Cardiac septum (tissue), 1 donor: ENCODE measurements at regions of chr2 and their contacts with region 1.

Region 1: DNA sequence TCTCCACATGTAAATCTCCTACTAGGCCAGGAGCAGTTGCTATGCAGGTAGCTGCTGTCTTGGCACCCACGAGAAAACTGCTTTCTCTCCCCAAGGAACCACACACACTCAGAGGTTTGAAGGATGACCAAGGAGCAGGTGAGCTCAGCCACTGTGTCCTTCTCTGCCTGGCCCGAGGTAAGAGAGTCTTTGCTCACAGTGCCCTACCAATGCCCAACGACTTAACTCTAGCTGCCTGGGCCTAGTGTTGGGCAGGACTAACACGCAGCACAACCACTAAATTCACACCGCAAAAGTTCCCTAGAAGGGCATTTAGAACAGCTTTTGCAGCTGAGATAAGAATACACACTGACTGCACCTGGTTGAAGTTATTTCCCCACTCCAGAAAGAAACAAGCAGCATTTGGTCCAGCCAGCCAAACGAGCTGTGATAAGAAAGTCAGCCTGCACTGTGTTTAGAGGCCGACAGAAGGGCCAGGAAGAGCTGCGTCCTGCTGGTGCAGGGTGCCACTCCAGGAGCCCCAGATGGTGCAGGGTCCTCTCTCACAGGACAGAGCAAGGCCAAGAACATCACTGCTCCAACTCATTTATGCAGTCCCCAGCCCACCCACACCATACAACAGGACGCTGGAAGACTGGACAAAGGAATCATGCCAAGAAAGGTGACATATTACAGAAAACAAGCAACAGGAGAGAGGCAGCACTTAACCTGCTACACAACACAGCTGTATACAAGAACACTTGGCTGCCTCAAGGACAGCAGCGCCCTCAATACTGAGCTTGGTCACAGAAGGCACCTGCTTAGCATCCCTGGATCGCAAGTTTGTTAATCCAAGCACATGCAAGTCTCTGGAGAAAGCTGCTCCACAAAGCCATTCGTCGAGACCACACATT is 12.5 kb downstream of the HDLBP start:
- DNase-seq: no peak

Region 2: DNA sequence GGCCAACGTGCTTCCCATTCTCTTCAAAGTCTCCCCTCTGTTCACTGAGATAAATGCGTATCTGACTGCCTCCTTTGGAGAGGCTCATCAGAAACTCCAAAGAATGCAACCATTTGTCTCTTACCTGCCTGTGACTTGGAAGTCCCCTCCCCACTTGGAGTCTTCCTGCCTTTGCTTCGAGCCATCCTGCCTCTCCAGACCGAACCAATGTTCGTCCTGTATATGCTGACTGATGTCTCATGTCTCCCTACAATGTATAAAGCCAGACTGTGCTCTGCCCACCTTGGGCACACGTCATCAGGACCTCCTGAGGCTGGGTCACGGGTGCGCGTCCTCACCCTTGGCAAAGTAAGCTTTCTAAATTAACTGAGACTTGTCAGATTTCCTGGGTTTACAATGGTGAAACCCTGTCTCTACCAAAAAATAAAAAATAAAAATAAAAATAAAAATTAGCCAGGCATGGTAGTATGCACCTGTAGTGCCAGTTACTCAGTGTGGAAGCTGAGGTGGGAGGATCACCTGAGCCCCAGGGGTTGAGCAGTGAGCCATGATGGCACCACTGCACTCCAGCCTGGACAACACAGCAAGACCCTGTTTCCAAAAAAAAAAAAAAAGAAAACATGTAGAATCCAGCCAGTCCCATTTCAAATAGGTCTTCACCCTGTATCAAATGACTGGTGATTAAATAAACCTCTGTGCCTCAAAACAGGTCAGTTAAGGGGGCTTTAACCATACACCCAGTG is 16.5 kb before region 1 on chr2:
- intact Hi-C with region 1: loop called (anchors 2 kb)
- DNase-seq: no peak